ENCODE measurements at regions of chr5 and their contacts with region 1.

Region 1: GRCh38 chr5:76771705-76772405 is 47.0 kb upstream of the F2RL1 start:
- DNase-seq: no peak
- H3K4me3 Mint-ChIP-seq: no peak overlapping the region
- H3K27ac Mint-ChIP-seq: no peak overlapping the region
- H3K4me1 Mint-ChIP-seq: peaks cover 2% of the 10 kb centered on the region
- H3K27me3 Mint-ChIP-seq: no peaks in the 10 kb centered on the region

Region 2: GRCh38 chr5:76544268-76544926 is 227.5 kb before region 1 on chr5:
- CTCF ChIA-PET with region 1: interaction called, 12 read pairs
- POLR2A ChIA-PET with region 1: interaction called, 3 read pairs
- DNase-seq: peak; percentile 73
- H3K4me3 Mint-ChIP-seq: peak overlapping the region; percentile 75
- H3K27ac Mint-ChIP-seq: peak overlapping the region; percentile 99
- H3K4me1 Mint-ChIP-seq: peaks cover 93% of the 10 kb centered on the region
- H3K27me3 Mint-ChIP-seq: no peaks in the 10 kb centered on the region

Region 3: DNA sequence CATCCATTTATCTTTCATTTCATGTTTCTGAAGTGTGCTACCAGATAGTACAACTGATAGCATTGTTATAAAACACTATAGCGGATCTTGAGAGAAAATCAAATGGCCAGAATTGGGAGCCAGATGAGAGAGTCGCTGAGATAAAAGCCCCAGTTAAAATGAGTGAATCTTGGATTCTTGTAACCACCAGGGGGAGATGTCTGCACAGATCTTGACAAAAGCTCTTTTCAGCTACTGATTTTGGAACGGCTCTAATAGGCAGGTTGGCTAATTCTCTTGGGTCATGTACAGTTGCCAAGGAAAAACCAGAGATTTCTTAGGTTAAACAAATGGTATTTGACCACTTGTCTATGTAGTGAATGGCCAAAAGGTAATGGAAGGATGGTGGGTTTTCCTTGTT is 170.4 kb before region 1 on chr5:
- CTCF ChIA-PET with region 1: interaction called, 49 read pairs
- POLR2A ChIA-PET with region 1: interaction called, 6 read pairs
- DNase-seq: no peak
- H3K4me3 Mint-ChIP-seq: no peak overlapping the region
- H3K27ac Mint-ChIP-seq: no peak overlapping the region
- H3K4me1 Mint-ChIP-seq: peaks cover 13% of the 10 kb centered on the region
- H3K27me3 Mint-ChIP-seq: no peaks in the 10 kb centered on the region

Region 4: GRCh38 chr5:76638479-76638878 is 133.4 kb before region 1 on chr5:
- CTCF ChIA-PET with region 1: interaction called, 12 read pairs
- POLR2A ChIA-PET with region 1: interaction called, 4 read pairs
- DNase-seq: no peak
- H3K4me3 Mint-ChIP-seq: no peak overlapping the region
- H3K27ac Mint-ChIP-seq: peak overlapping the region; percentile 12
- H3K4me1 Mint-ChIP-seq: peaks cover 19% of the 10 kb centered on the region
- H3K27me3 Mint-ChIP-seq: no peaks in the 10 kb centered on the region

Region 5: GRCh38 chr5:76705574-76705973 is 66.3 kb before region 1 on chr5:
- CTCF ChIA-PET with region 1: interaction called, 20 read pairs
- POLR2A ChIA-PET with region 1: no interaction called
- DNase-seq: no peak
- H3K4me3 Mint-ChIP-seq: no peak overlapping the region
- H3K27ac Mint-ChIP-seq: no peak overlapping the region
- H3K4me1 Mint-ChIP-seq: peaks cover 22% of the 10 kb centered on the region
- H3K27me3 Mint-ChIP-seq: no peaks in the 10 kb centered on the region

Region 6: GRCh38 chr5:76720988-76721569 is 50.8 kb before region 1 on chr5:
- CTCF ChIA-PET with region 1: interaction called, 31 read pairs
- POLR2A ChIA-PET with region 1: interaction called, 9 read pairs
- DNase-seq: no peak
- H3K4me3 Mint-ChIP-seq: no peak overlapping the region
- H3K27ac Mint-ChIP-seq: no peak overlapping the region
- H3K4me1 Mint-ChIP-seq: peaks cover 51% of the 10 kb centered on the region
- H3K27me3 Mint-ChIP-seq: no peaks in the 10 kb centered on the region

Region 7: DNA sequence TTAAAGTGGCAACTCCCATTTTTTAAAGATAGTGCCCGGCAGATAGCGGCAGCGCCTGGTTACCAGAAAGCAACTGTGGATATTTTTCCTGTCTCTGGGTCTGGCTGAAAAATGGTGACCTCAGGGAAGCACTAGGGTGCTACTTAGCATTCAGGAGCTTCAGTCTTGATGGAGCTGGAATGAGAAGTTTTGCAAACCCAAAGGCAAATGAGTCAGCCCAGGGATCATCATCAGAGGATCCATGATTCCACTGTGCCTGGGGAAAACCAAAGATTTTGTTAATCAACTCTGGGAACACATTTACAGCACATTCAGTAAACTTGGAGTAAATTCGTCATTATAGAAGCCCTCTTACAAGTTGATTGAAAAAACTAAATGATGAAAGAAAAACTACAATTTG is 29.3 kb before region 1 on chr5:
- CTCF ChIA-PET with region 1: interaction called, 60 read pairs
- POLR2A ChIA-PET with region 1: interaction called, 6 read pairs
- DNase-seq: no peak
- H3K4me3 Mint-ChIP-seq: no peak overlapping the region
- H3K27ac Mint-ChIP-seq: no peak overlapping the region
- H3K4me1 Mint-ChIP-seq: peaks cover 38% of the 10 kb centered on the region
- H3K27me3 Mint-ChIP-seq: no peaks in the 10 kb centered on the region